ENCODE measurements at regions of chr2 and their contacts with region 1.

Region 1: GRCh38 chr2:105114551-105114950 is 76.7 kb downstream of the MRPS9 start:
- DNase-seq: no peak
- H3K4me3 ChIP-seq: no peak overlapping the region
- H3K27ac ChIP-seq: no peak overlapping the region
- H3K4me1 ChIP-seq: no peaks in the 10 kb centered on the region
- H3K27me3 ChIP-seq: no peaks in the 10 kb centered on the region
- CTCF ChIP-seq: peak; percentile 33 to 60

Region 2: GRCh38 chr2:105220604-105221003 is 106.1 kb after region 1 on chr2:
- intact Hi-C with region 1: loop called (anchors 5 kb)
- DNase-seq: no peak
- H3K4me3 ChIP-seq: no peak overlapping the region
- H3K27ac ChIP-seq: no peak overlapping the region
- H3K4me1 ChIP-seq: no peaks in the 10 kb centered on the region
- H3K27me3 ChIP-seq: no peaks in the 10 kb centered on the region
- CTCF ChIP-seq: no peak

Region 3: DNA sequence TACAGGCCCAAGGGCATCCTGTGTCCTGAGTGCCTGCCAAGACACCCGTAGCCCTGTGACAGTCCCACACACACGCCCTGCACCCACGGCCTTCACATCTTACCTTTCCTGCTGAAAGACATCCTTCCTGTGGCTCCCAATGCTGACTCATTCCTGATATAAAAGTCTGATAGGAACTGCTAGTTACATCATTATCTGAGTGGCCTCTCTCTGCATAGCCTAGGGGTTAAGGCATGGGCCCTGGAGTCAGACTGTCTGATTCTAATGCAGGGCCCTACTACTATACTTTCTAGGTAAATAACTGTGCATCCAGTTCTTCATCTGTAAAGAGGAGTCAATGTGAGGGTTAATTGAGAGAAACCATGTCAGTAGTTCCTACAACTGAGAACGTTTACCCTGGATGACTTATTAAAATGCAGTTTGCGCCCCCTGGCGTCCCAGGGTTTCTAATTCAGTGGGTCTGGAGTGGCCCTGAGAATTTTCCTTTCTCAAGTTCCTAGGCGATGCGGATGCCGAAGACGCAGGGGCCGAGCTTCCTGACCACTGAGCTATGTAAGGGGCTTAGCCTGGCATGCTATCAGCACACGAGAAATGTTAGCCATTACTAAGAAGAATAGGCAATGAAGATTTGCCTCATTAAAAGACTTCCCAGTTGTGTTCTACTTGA is 121.0 kb after region 1 on chr2:
- intact Hi-C with region 1: loop called (anchors 5 kb)
- DNase-seq: peak in 1 of 2 donors; percentile 79
- H3K4me3 ChIP-seq: no peak overlapping the region
- H3K27ac ChIP-seq: no peak overlapping the region
- H3K4me1 ChIP-seq: no peaks in the 10 kb centered on the region
- H3K27me3 ChIP-seq: peaks cover 0 to 14% of the 10 kb centered on the region in 2 donors
- CTCF ChIP-seq: peak; percentile 45 to 47

Measured in tibial artery (tissue), 4 donors.